Calu3 (cell line): ENCODE measurements at regions of chr2 and their contacts with region 1.

Region 1: DNA sequence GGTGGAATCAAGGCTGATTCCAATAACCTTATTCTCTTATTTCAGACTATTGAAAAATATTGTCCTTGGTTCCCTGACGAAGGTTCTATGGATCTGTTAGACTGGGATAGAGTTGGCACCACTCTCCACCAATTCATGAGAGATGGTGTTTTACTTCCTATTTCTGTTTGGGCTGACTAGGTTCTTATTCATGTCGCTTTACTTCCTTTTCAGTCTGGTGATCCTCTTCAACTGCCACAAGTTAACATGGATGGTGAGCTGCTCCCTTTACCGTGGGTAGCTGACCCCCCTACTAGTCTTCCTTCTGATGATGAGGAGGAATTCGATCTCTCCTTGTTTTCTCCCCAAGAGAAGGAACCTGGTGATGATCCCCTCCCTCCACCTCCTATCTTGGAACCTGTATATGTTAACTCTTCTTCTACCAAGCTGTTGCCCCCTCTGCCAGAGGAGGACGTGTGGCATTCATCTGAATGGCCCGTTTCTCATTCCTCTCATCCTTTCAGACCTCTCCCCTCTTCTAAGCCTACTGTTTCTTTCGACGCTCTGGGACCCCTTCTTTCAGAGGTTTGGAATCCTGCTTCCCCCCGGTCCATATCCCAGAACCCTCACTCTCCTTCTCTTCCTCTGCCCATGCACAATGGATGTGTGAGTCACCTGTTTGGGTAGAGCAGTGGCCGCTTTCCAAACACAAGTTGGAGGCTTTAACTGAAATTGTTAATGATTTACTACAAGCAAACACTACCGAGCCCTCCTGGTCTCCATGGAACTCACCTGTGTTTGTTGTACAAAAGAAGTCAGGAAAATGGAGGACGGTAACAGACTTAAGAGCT is 13.5 kb upstream of the CNOT11 start:
- DNase-seq: peak; percentile 77
- H3K4me3 Mint-ChIP-seq: peak overlapping the region; percentile 53
- H3K27ac Mint-ChIP-seq: peak overlapping the region; percentile 96
- H3K4me1 Mint-ChIP-seq: peaks cover 79% of the 10 kb centered on the region
- H3K27me3 Mint-ChIP-seq: no peaks in the 10 kb centered on the region
- CTCF ChIP-seq: no peak

Region 2: GRCh38 chr2:100588071-100588786 is 650.9 kb before region 1 on chr2:
- CTCF ChIA-PET with region 1: interaction called, 10 read pairs
- intact Hi-C with region 1: no loop called
- DNase-seq: no peak
- H3K4me3 Mint-ChIP-seq: no peak overlapping the region
- H3K27ac Mint-ChIP-seq: no peak overlapping the region
- H3K4me1 Mint-ChIP-seq: peaks cover 34% of the 10 kb centered on the region
- H3K27me3 Mint-ChIP-seq: no peaks in the 10 kb centered on the region
- CTCF ChIP-seq: no peak

Region 3: GRCh38 chr2:101188683-101189405 is 50.3 kb before region 1 on chr2:
- CTCF ChIA-PET with region 1: no interaction called
- intact Hi-C with region 1: no loop called
- DNase-seq: peak; percentile 36
- H3K4me3 Mint-ChIP-seq: no peak overlapping the region
- H3K27ac Mint-ChIP-seq: no peak overlapping the region
- H3K4me1 Mint-ChIP-seq: no peaks in the 10 kb centered on the region
- H3K27me3 Mint-ChIP-seq: no peaks in the 10 kb centered on the region
- CTCF ChIP-seq: no peak

Region 4: GRCh38 chr2:101252408-101253012 is 13.4 kb after region 1 on chr2 and contains the start of gene CNOT11:
- CTCF ChIA-PET with region 1: interaction called, 15 read pairs
- intact Hi-C with region 1: loop called (anchors 1 kb)
- DNase-seq: peak; percentile 98
- H3K4me3 Mint-ChIP-seq: peak within 1 kb of the TSS; percentile 85
- H3K27ac Mint-ChIP-seq: peak within 1 kb of the TSS; percentile 86
- H3K4me1 Mint-ChIP-seq: peaks cover 42% of the 10 kb centered on the region
- H3K27me3 Mint-ChIP-seq: no peaks in the 10 kb centered on the region
- CTCF ChIP-seq: no peak
- total RNA-seq, gene CNOT11: 67.7 and 74.5 TPM in 2 replicates